ENCODE measurements at regions of chr14 and their contacts with region 1.

Region 1: GRCh38 chr14:61662437-61663311 is 32.6 kb upstream of the HIF1A start:
- DNase-seq: peak; percentile 64
- H3K4me3 Mint-ChIP-seq: peak overlapping the region; percentile 76
- H3K27ac Mint-ChIP-seq: peak overlapping the region; percentile 99
- H3K4me1 Mint-ChIP-seq: peaks cover 70% of the 10 kb centered on the region
- H3K27me3 Mint-ChIP-seq: no peaks in the 10 kb centered on the region

Region 2: DNA sequence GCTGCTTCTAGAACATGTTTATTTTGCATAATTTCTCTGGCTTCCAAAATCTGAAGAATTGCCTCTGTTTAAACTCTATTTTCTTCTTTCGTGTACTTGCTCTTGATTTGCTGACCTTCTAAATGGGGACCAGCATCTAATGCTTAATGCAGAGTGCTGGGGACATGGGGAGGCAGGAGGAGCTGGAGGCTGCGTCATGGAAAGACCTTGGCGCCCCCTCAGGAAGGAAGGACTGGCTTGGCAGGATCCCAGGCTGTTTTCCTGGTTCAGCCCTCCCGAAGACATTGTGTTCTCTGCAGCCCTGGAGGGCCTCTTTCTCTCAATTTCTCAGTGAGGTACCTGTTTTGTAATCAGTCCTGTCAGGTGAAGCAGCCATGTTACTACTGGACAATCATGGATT is 335.8 kb before region 1 on chr14:
- intact Hi-C with region 1: loop called (anchors 2 kb)
- DNase-seq: no peak
- H3K4me3 Mint-ChIP-seq: peak overlapping the region; percentile 93
- H3K27ac Mint-ChIP-seq: peak overlapping the region; percentile 86
- H3K4me1 Mint-ChIP-seq: peaks cover 77% of the 10 kb centered on the region
- H3K27me3 Mint-ChIP-seq: no peaks in the 10 kb centered on the region

Region 3: GRCh38 chr14:61503167-61503801 is 159.4 kb before region 1 on chr14:
- intact Hi-C with region 1: loop called (anchors 1 kb)
- DNase-seq: peak; percentile 51
- H3K4me3 Mint-ChIP-seq: peak overlapping the region; percentile 76
- H3K27ac Mint-ChIP-seq: peak overlapping the region; percentile 99
- H3K4me1 Mint-ChIP-seq: peaks cover 94% of the 10 kb centered on the region
- H3K27me3 Mint-ChIP-seq: no peaks in the 10 kb centered on the region

Region 4: GRCh38 chr14:61561657-61562276 is 100.9 kb before region 1 on chr14:
- intact Hi-C with region 1: loop called (anchors 1 kb)
- DNase-seq: no peak
- H3K4me3 Mint-ChIP-seq: peak overlapping the region; percentile 37
- H3K27ac Mint-ChIP-seq: peak overlapping the region; percentile 27
- H3K4me1 Mint-ChIP-seq: peaks cover 70% of the 10 kb centered on the region
- H3K27me3 Mint-ChIP-seq: no peaks in the 10 kb centered on the region

Region 5: GRCh38 chr14:61620130-61620946 is 42.3 kb before region 1 on chr14:
- intact Hi-C with region 1: loop called (anchors 1 kb)
- DNase-seq: no peak
- H3K4me3 Mint-ChIP-seq: no peak overlapping the region
- H3K27ac Mint-ChIP-seq: peak overlapping the region; percentile 31
- H3K4me1 Mint-ChIP-seq: peaks cover 54% of the 10 kb centered on the region
- H3K27me3 Mint-ChIP-seq: no peaks in the 10 kb centered on the region

Region 6: DNA sequence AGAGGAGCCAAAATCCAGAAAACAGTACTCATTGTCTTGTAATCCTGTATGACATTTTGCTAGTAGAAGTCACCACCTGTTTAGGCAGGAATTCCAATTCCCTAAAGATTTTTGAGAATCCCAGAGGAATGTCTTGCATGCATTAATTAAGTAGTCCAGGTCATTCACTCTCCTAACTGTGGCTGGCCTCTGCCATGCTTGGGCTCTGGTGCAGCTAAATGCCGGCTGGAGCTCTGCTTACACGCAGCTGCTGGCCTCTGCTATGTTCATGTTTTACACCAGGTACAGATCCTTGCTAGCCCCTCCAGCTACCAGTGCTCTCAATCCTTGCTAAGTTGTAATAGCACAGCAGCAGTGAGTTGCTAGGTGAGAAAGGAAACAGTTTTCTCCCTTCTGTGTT is 16.3 kb after region 1 on chr14:
- intact Hi-C with region 1: no loop called
- DNase-seq: no peak
- H3K4me3 Mint-ChIP-seq: no peak overlapping the region
- H3K27ac Mint-ChIP-seq: no peak overlapping the region
- H3K4me1 Mint-ChIP-seq: peaks cover 24% of the 10 kb centered on the region
- H3K27me3 Mint-ChIP-seq: peaks cover 4% of the 10 kb centered on the region

Region 7: GRCh38 chr14:61730756-61731373 is 68.2 kb after region 1 on chr14:
- intact Hi-C with region 1: no loop called
- DNase-seq: no peak
- H3K4me3 Mint-ChIP-seq: peak overlapping the region; percentile 8
- H3K27ac Mint-ChIP-seq: peak overlapping the region; percentile 61
- H3K4me1 Mint-ChIP-seq: peaks cover 82% of the 10 kb centered on the region
- H3K27me3 Mint-ChIP-seq: no peaks in the 10 kb centered on the region

Region 8: GRCh38 chr14:61761959-61762786 is 99.5 kb after region 1 on chr14 and contains the start of gene SNAPC1:
- intact Hi-C with region 1: loop called (anchors 1 kb)
- DNase-seq: peak; percentile 97
- H3K4me3 Mint-ChIP-seq: peak within 1 kb of the TSS; percentile 91
- H3K27ac Mint-ChIP-seq: peak within 1 kb of the TSS; percentile 90
- H3K4me1 Mint-ChIP-seq: peaks cover 59% of the 10 kb centered on the region
- H3K27me3 Mint-ChIP-seq: peaks cover 3% of the 10 kb centered on the region
- total RNA-seq, gene SNAPC1: 10.8 and 11.0 TPM in 2 replicates

Region 9: DNA sequence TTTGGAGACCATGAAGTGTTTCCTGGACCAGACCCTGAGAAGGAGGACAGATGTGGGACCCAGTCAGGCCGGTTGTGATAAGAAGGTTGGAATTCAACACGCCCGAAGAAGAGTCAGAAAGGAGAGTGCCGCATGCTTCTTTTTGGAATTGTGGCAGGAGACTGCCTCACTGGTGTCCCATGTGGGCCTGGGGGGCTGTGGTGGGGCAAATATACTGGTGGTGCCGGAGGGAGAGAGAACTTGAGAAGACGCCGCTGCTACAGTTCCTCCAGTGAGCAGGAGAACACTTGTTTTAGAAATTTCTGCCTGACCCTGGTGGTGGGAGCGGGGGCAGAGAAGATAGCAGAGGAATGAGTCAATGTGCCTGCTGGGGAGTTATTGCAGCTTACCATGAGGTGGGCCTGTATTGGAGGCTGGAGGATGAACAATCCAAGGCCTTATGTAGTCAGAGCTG is 311.2 kb after region 1 on chr14:
- intact Hi-C with region 1: no loop called
- DNase-seq: no peak
- H3K4me3 Mint-ChIP-seq: no peak overlapping the region
- H3K27ac Mint-ChIP-seq: no peak overlapping the region
- H3K4me1 Mint-ChIP-seq: no peaks in the 10 kb centered on the region
- H3K27me3 Mint-ChIP-seq: no peaks in the 10 kb centered on the region

Measured in activated T-helper 1 cell treated with anti-CD3 and anti-CD28 coated beads, Interleukin-12 subunit alpha, Interleukin-12 subunit beta, Interleukin-2, Interleukin-4 antibody, amounts not matched to agents 30 ng/mL and 10 ng/mL and 1 ng/mL, durations not matched to agents 14 hours and 24 hours and 36 hours (primary cell).